Activated CD8-positive, alpha-beta T cell treated with anti-CD3 and anti-CD28 coated beads, Interleukin-2, amount 10 ng/mL, durations not matched to agents 7 days and 5 days (primary cell): ENCODE measurements at regions of chr12 and their contacts with region 1.

Region 1: GRCh38 chr12:575948-576612 is 87.2 kb downstream of the NINJ2 start:
- DNase-seq: peak; percentile 88
- ATAC-seq: peak; percentile 98
- H3K4me3 Mint-ChIP-seq: no peak overlapping the region
- H3K27ac Mint-ChIP-seq: peak overlapping the region; percentile 85
- H3K4me1 Mint-ChIP-seq: peaks cover 40% of the 10 kb centered on the region
- H3K27me3 Mint-ChIP-seq: peaks cover 5% of the 10 kb centered on the region

Region 2: DNA sequence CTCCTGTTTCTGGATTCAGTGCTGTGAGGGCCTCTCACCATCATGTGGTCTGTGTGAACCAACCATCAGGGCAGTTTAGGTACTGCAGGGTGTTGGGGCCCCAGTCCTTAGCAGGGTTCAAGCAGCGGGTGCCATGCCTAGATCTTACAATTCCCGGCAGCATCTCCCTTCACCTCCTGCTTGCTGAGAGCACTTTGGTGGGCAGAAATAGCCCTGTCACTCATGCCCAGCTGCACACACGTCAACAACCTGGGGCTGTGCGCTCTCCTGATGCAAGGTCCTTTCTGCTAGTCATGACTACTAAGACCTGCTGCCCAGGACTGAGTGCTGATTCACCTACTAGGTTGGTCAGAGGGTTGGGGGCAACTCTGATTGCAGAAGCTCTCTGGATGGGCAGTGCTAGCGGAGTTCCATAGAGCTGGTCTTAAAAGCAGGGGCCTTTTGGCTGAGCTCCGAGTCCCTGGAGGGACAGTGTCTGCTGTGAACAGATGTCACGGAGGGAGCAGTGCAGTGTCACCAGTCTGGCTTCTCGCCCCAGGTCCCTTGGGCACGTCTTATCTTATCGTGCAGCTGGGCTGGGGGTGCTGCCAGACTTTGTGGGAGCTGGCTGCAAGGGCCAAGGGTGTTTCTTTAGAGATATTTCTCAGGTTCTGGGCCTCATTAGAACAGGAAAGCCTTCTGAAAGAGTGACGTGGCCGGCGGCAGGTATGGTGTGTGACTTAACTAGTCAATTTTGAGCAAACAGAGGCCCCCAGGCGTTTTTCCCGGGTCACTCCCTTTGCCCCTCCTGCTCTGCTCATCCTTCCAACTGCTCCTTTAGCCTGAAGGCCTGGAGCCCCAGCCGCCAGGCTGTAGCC is 15.3 kb after region 1 on chr12:
- CTCF ChIA-PET with region 1: interaction called, 11 read pairs
- POLR2A ChIA-PET with region 1: no interaction called
- DNase-seq: no peak
- ATAC-seq: no peak
- H3K4me3 Mint-ChIP-seq: no peak overlapping the region
- H3K27ac Mint-ChIP-seq: no peak overlapping the region
- H3K4me1 Mint-ChIP-seq: no peaks in the 10 kb centered on the region
- H3K27me3 Mint-ChIP-seq: peaks cover 24% of the 10 kb centered on the region

Region 3: GRCh38 chr12:607526-608001 is 31.5 kb after region 1 on chr12:
- CTCF ChIA-PET with region 1: interaction called, 18 read pairs
- POLR2A ChIA-PET with region 1: interaction called, 3 read pairs
- DNase-seq: peak; percentile 47
- ATAC-seq: no peak
- H3K4me3 Mint-ChIP-seq: no peak overlapping the region
- H3K27ac Mint-ChIP-seq: peak overlapping the region; percentile 77
- H3K4me1 Mint-ChIP-seq: peaks cover 47% of the 10 kb centered on the region
- H3K27me3 Mint-ChIP-seq: peaks cover 2% of the 10 kb centered on the region

Region 4: GRCh38 chr12:642633-643474 is 66.8 kb after region 1 on chr12:
- CTCF ChIA-PET with region 1: interaction called, 13 read pairs
- POLR2A ChIA-PET with region 1: no interaction called
- DNase-seq: peak; percentile 84
- ATAC-seq: peak; percentile 86
- H3K4me3 Mint-ChIP-seq: peak overlapping the region; percentile 83
- H3K27ac Mint-ChIP-seq: peak overlapping the region; percentile 94
- H3K4me1 Mint-ChIP-seq: peaks cover 60% of the 10 kb centered on the region
- H3K27me3 Mint-ChIP-seq: no peaks in the 10 kb centered on the region

Region 5: GRCh38 chr12:810671-811415 is 234.8 kb after region 1 on chr12:
- CTCF ChIA-PET with region 1: interaction called, 69 read pairs
- POLR2A ChIA-PET with region 1: no interaction called
- DNase-seq: no peak
- ATAC-seq: peak; percentile 49
- H3K4me3 Mint-ChIP-seq: no peak overlapping the region
- H3K27ac Mint-ChIP-seq: no peak overlapping the region
- H3K4me1 Mint-ChIP-seq: peaks cover 70% of the 10 kb centered on the region
- H3K27me3 Mint-ChIP-seq: no peaks in the 10 kb centered on the region

Region 6: DNA sequence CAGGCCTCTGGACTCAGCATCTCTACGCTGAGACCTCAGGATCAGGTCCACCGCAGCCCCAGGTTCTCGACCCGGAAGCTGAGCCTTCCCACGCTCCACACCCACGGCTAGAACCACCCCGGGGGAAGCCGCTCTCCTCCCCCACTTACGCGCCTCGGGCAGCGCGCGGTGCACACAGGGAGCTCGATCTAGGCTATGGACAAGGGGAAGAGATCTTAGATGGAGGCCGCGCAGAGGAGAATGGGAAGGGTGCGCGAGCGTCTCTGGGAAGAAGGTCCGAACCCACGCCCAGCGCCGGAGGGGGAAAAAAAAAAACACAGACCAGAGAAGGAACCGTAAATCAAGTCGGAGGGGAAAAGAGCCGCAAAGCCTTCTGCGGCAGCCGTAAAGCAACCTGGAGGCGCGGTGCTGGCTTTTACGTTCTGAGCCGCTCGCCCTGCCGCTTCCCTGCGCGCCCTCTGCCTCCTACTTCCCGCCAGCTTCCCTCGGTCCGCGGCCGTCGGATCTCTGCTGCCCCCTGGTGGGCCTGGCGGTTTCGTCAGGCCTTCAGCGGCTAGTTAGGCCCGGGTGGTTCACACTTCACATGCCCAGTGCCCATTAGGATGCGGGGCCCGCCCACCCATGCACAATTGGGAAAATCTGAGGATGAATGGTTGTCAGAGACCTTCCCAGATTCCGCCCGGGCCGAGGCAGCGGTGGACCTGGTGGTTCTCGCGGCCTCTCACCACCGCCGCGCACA is 373.5 kb after region 1 on chr12 and contains the start of gene RAD52:
- CTCF ChIA-PET with region 1: interaction called, 11 read pairs
- POLR2A ChIA-PET with region 1: no interaction called
- DNase-seq: peak; percentile 98
- ATAC-seq: peak; percentile 89
- H3K4me3 Mint-ChIP-seq: peak within 1 kb of the TSS; percentile 91
- H3K27ac Mint-ChIP-seq: peak within 1 kb of the TSS; percentile 81
- H3K4me1 Mint-ChIP-seq: peaks cover 39% of the 10 kb centered on the region
- H3K27me3 Mint-ChIP-seq: peaks cover 4% of the 10 kb centered on the region
- total RNA-seq, gene RAD52: 19.3 to 20.9 TPM